Heart right ventricle (tissue), 16 donors: ENCODE measurements at regions of chr7 and their contacts with region 1.

Region 1: GRCh38 chr7:141522657-141523342 is 28.4 kb upstream of the AGK start:
- DNase-seq: no peak
- ATAC-seq: no peak
- H3K4me3 ChIP-seq: no peak overlapping the region
- H3K27ac ChIP-seq: no peak overlapping the region
- H3K4me1 ChIP-seq: no peaks in the 10 kb centered on the region
- H3K27me3 ChIP-seq: no peaks in the 10 kb centered on the region
- CTCF ChIP-seq: no peak

Region 2: DNA sequence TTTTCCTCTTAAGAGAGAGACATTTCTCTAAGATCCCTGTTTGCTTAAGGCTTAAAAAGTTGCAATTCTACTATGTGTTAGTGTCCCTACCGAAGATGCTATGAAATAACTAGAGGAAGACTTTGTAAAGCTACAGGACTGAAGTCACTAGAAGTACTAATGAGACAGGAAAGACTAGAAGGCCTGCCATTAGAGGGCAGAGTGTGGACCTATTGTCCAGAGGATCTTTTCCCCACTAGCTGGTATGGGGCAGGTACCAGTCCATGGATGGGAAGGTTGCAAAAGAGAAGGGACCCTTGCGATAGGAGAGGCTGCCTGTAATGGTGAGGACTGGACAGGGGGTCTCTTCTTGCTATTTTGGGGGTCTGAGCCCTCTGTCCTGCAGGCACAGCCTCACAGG is 270.8 kb before region 1 on chr7:
- intact Hi-C with region 1: loop called in 1 of 10 experiments (anchors 10 kb)
- DNase-seq: no peak
- ATAC-seq: peak in 3 of 8 donors; percentile 37 to 50 (median 46)
- H3K4me3 ChIP-seq: no peak overlapping the region
- H3K27ac ChIP-seq: no peak overlapping the region
- H3K4me1 ChIP-seq: no peaks in the 10 kb centered on the region
- H3K27me3 ChIP-seq: no peaks in the 10 kb centered on the region
- CTCF ChIP-seq: peak in 2 of 9 donors; percentile 20 to 29

Region 3: DNA sequence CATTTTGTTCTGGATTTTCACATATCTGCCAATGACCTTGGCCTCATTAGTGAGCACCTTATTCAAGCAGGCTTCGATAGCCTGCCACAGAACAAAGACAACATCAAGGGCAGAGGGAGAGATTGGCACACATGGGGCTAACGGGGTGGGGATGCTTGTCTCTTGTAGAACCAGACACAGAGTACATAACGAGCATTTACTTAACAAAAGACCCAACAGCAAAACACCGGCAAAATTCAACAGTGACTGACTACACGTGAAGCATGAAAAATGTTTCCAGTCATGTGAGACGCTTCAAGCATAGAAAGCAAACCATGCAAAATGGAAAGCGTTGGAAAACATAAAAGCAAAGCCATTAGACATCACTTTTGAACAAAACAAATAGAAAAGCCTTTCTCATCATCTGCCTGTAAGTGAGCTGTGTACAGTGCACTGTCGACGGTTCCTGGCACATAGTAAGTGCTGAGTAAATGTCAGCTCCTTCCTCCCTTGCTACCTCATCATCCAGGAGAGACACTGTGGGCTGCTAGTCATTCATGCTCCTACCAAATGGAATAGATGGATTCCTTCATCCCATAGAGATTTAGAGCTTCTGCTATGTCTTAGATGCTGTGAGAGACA is 106.0 kb before region 1 on chr7:
- intact Hi-C with region 1: no loop called
- DNase-seq: no peak
- ATAC-seq: no peak
- H3K4me3 ChIP-seq: no peak overlapping the region
- H3K27ac ChIP-seq: no peak overlapping the region
- H3K4me1 ChIP-seq: peaks cover 0 to 17% (median 6%) of the 10 kb centered on the region in 9 donors
- H3K27me3 ChIP-seq: peaks cover 0 to 1% (median 0%) of the 10 kb centered on the region in 7 donors
- CTCF ChIP-seq: no peak

Region 4: GRCh38 chr7:141575164-141575563 is 52.4 kb after region 1 on chr7:
- intact Hi-C with region 1: no loop called
- DNase-seq: no peak
- ATAC-seq: no peak
- H3K4me3 ChIP-seq: no peak overlapping the region
- H3K27ac ChIP-seq: no peak overlapping the region
- H3K4me1 ChIP-seq: peaks cover 0 to 26% (median 0%) of the 10 kb centered on the region in 9 donors
- H3K27me3 ChIP-seq: no peaks in the 10 kb centered on the region
- CTCF ChIP-seq: no peak

Region 5: GRCh38 chr7:141731476-141732149 is 208.8 kb after region 1 on chr7:
- intact Hi-C with region 1: no loop called
- DNase-seq: peak; percentile 8 to 25
- ATAC-seq: peak in 7 of 8 donors; percentile 40 to 83 (median 67)
- H3K4me3 ChIP-seq: peak overlapping the region in 2 of 10 donors; percentile 6 to 17
- H3K27ac ChIP-seq: no peak overlapping the region
- H3K4me1 ChIP-seq: peaks cover 0 to 1% (median 0%) of the 10 kb centered on the region in 9 donors
- H3K27me3 ChIP-seq: no peaks in the 10 kb centered on the region
- CTCF ChIP-seq: no peak